PC-3 (cell line): ENCODE measurements at regions of chr14 and their contacts with region 1.

Region 1: GRCh38 chr14:20613094-20614037 is 22.2 kb upstream of the RNASE12 start:
- DNase-seq: peak; percentile 99
- ATAC-seq: peak; percentile 75
- H3K4me3 ChIP-seq: peak overlapping the region; percentile 90
- H3K27ac ChIP-seq: peak overlapping the region; percentile 21
- H3K4me1 ChIP-seq: peaks cover 28% of the 10 kb centered on the region
- H3K27me3 ChIP-seq: no peaks in the 10 kb centered on the region
- CTCF ChIP-seq: peak; percentile 83

Region 2: DNA sequence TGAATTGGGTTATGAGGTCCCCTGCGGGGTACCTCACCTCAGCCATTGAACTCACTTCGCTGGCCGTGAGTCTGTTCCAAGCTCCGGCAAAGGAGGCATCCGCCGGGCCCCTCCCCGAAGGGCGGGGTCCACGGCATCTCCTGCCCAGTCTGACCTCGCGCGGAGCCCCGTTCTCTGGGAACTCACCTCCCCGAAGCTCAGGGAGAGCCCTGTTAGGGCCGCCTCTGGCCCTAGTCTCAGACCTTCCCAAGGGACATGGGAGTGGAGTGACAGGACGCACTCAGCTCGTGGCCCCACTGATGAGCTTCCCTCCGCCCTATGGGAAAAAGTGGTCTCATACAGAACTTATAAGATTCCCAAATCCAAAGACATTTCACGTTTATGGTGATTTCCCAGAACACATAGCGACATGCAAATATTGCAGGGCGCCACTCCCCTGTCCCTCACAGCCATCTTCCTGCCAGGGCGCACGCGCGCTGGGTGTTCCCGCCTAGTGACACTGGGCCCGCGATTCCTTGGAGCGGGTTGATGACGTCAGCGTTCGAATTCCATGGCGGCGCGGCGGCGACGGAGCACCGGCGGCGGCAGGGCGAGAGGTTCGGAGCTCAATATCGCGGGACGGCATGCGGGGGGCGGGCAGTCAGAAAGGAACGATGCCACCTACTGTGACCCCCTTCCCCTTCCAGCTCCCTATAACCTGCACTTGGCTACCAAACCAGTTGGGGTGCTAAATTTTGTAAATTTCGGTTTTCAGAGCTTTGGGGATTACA is 270.1 kb before region 1 on chr14 and contains the start of gene PARP2:
- CTCF ChIA-PET with region 1: interaction called, 16 read pairs
- POLR2A ChIA-PET with region 1: interaction called, 4 read pairs
- intact Hi-C with region 1: loop called (anchors 1 kb)
- DNase-seq: peak; percentile 100
- ATAC-seq: peak; percentile 99
- H3K4me3 ChIP-seq: peak within 1 kb of the TSS; percentile 98
- H3K27ac ChIP-seq: peak within 1 kb of the TSS; percentile 75
- H3K4me1 ChIP-seq: peaks cover 9% of the 10 kb centered on the region; the same call in 1 of the 2 replicates
- H3K27me3 ChIP-seq: no peaks in the 10 kb centered on the region
- CTCF ChIP-seq: no peak
- total RNA-seq, gene PARP2: 35.6 and 38.3 TPM in 2 replicates

Region 3: DNA sequence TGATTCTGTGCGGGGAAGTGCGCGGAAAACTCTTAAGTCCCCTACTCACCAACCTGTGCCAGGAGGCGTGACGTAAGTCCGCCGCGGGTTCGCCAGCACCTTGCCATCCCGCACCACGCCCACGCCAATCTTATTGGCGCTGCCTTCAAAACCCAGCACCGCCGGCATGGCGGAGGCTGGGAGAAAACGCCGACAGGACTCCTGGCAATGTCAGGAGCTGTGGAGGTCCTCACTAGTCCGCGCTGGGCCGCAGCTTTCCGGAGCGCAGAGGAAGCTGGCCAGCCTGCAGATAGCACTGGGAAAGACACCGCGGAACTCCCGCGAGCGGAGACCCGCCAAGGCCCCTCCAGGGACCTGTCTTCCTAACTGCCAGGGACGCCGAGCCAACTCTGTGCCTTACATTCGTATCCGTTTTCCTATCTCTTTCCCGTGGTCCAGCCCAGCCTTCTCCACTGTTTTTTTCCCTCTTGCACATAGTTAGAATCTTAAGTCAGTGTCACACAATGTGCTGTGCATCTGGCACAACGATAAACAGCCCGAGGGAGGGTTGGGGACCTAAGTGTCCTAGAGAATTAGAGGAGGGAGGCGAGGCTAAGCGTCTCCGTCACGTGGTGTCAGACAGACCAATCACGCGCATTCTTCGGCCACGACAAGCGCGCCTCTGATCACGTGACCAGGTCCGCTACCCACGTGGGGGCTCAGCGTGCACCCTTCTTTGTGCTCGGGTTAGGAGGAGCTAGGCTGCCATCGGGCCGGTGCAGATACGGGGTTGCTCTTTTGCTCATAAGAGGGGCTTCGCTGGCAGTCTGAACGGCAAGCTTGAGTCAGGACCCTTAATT is 158.6 kb before region 1 on chr14 and contains the starts of genes APEX1 and OSGEP:
- CTCF ChIA-PET with region 1: interaction called, 5 read pairs
- POLR2A ChIA-PET with region 1: no interaction called
- intact Hi-C with region 1: loop called (anchors 1 kb)
- DNase-seq: peak; percentile 99
- ATAC-seq: peak; percentile 86
- H3K4me3 ChIP-seq: peak within 1 kb of the TSS; percentile 82
- H3K27ac ChIP-seq: peak within 1 kb of the TSS; percentile 93
- H3K4me1 ChIP-seq: peaks cover 14% of the 10 kb centered on the region
- H3K27me3 ChIP-seq: no peaks in the 10 kb centered on the region
- CTCF ChIP-seq: no peak
- total RNA-seq, gene APEX1: 147 and 189 TPM in 2 replicates
- total RNA-seq, gene OSGEP: 57.7 and 64.1 TPM in 2 replicates

Region 4: DNA sequence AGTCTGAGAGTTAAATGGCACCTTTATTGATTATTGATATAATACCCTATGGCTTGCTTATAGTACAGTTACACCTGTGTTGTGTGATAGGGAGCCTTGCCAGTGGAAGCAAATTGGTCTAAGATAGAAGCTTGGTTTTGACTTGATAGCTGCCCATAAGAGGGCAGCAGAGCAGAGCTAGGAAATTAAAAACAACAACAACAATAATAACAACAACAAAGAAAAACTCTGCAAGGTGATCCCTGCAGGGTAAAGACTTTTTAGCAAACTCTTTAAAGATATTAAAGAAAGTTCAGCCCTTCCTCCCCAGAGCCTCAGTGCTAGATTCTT is 126.0 kb before region 1 on chr14:
- CTCF ChIA-PET with region 1: no interaction called
- POLR2A ChIA-PET with region 1: no interaction called
- intact Hi-C with region 1: loop called (anchors 2 kb)
- DNase-seq: no peak
- ATAC-seq: no peak
- H3K4me3 ChIP-seq: no peak overlapping the region
- H3K27ac ChIP-seq: no peak overlapping the region
- H3K4me1 ChIP-seq: peaks cover 25% of the 10 kb centered on the region
- H3K27me3 ChIP-seq: no peaks in the 10 kb centered on the region
- CTCF ChIP-seq: peak; percentile 60

Region 5: GRCh38 chr14:20662968-20663732 is 49.8 kb after region 1 on chr14:
- CTCF ChIA-PET with region 1: interaction called, 4 read pairs
- POLR2A ChIA-PET with region 1: no interaction called
- intact Hi-C with region 1: loop called (anchors 1 kb)
- DNase-seq: peak; percentile 90
- ATAC-seq: peak; percentile 90
- H3K4me3 ChIP-seq: peak overlapping the region; percentile 70
- H3K27ac ChIP-seq: no peak overlapping the region
- H3K4me1 ChIP-seq: no peaks in the 10 kb centered on the region; the same call in 1 of the 2 replicates
- H3K27me3 ChIP-seq: no peaks in the 10 kb centered on the region
- CTCF ChIP-seq: peak; percentile 88

Region 6: DNA sequence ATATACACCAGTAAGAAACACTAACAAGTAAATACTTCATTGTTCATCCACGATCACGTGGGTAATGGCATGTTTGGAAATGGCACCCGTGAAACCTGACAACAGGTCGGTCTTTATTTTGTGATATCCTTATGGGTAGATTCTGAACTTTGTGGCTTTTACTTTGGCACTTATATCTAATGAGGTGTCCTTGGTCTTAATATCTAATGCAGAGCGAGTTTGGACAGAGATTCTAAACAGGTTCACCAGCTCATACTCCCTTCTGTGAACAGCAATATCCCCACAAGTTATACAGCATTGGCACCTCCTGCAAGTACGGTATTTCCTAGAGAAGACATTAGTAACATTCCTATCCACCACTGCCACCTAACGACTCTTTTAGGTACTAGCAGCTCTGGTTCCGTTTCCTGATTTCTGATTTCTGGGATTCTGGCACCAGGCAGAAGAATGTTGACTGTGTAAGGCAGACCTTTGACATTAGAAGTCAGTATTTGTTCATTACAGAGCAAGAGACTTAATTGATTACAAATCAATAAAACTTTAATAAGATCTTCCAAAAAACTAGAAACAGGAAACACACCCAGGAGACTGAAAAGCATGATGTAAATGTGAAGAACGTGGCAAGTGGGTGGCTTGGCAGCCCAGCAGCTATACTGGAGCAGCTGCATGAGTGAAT is 77.6 kb after region 1 on chr14:
- CTCF ChIA-PET with region 1: interaction called, 6 read pairs
- POLR2A ChIA-PET with region 1: no interaction called
- intact Hi-C with region 1: loop called (anchors 1 kb)
- DNase-seq: peak; percentile 86
- ATAC-seq: peak; percentile 89
- H3K4me3 ChIP-seq: peak overlapping the region; percentile 55
- H3K27ac ChIP-seq: no peak overlapping the region
- H3K4me1 ChIP-seq: no peaks in the 10 kb centered on the region
- H3K27me3 ChIP-seq: no peaks in the 10 kb centered on the region
- CTCF ChIP-seq: peak; percentile 92

Region 7: GRCh38 chr14:20734430-20734806 is 121.1 kb after region 1 on chr14:
- CTCF ChIA-PET with region 1: no interaction called
- POLR2A ChIA-PET with region 1: no interaction called
- intact Hi-C with region 1: no loop called
- DNase-seq: no peak
- ATAC-seq: no peak
- H3K4me3 ChIP-seq: no peak overlapping the region
- H3K27ac ChIP-seq: no peak overlapping the region
- H3K4me1 ChIP-seq: no peaks in the 10 kb centered on the region
- H3K27me3 ChIP-seq: peaks cover 75% of the 10 kb centered on the region
- CTCF ChIP-seq: no peak